Gastrocnemius medialis (tissue), 4 donors: ENCODE measurements at regions of chrX and their contacts with region 1.

Region 1: GRCh38 chrX:30713061-30713525 is 59.9 kb downstream of the GK start:
- DNase-seq: no peak
- ATAC-seq: no peak
- H3K4me3 ChIP-seq: no peak overlapping the region
- H3K27ac ChIP-seq: no peak overlapping the region
- H3K4me1 ChIP-seq: no peaks in the 10 kb centered on the region
- H3K27me3 ChIP-seq: no peaks in the 10 kb centered on the region
- CTCF ChIP-seq: peak in 2 of 5 experiments; percentile 44
- POLR2A ChIP-seq: no peak

Region 2: DNA sequence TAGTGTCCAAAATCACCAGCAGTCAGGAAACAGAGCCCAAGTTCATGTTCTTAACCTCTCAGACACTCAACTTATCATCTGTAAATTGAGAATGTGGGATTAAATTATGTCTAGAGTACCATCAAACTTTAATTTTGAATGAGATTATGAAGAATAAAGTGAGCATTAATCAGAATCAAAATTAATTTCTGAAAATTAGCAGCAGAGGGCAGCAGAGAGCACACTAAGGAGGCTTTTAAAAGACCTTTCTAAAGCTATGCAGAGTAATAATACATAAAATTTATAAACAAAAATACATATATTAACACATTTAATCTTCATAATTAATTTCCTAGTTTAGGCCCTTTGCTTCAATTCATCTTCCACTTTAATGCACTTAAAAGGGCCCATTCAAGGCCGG is 142.6 kb before region 1 on chrX:
- in situ Hi-C with region 1: loop called (anchors 10 to 25 kb)
- intact Hi-C with region 1: no loop called
- DNase-seq: no peak
- ATAC-seq: no peak
- H3K4me3 ChIP-seq: no peak overlapping the region
- H3K27ac ChIP-seq: no peak overlapping the region
- H3K4me1 ChIP-seq: no peaks in the 10 kb centered on the region
- H3K27me3 ChIP-seq: no peaks in the 10 kb centered on the region
- CTCF ChIP-seq: peak in 4 of 5 experiments; percentile 26 to 49 (median 32)
- POLR2A ChIP-seq: no peak

Region 3: DNA sequence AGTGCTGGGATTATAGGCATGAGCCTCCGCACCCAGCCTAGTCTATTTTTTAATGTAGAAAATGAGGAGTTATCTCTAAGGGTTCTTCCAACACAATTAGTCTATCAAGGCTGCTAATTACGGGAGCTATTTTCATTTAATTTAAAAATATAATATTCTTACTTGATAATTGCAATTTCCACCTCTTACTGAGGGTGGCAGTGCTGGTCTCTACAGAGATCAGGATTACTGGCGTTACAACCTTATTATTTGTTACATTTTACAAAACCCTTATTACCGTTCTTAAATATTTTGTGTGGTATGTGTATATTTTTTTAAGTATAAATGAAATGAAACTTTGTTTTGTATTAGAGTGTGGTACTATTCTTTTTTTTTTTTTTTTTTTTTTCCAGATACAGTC is 77.5 kb before region 1 on chrX:
- in situ Hi-C with region 1: no loop called
- intact Hi-C with region 1: no loop called
- DNase-seq: no peak
- ATAC-seq: no peak
- H3K4me3 ChIP-seq: no peak overlapping the region
- H3K27ac ChIP-seq: no peak overlapping the region
- H3K4me1 ChIP-seq: no peaks in the 10 kb centered on the region
- H3K27me3 ChIP-seq: no peaks in the 10 kb centered on the region
- CTCF ChIP-seq: no peak
- POLR2A ChIP-seq: no peak

Region 4: GRCh38 chrX:30791296-30792278 is 78.5 kb after region 1 on chrX:
- in situ Hi-C with region 1: no loop called
- intact Hi-C with region 1: no loop called
- DNase-seq: no peak
- ATAC-seq: no peak
- H3K4me3 ChIP-seq: no peak overlapping the region
- H3K27ac ChIP-seq: no peak overlapping the region
- H3K4me1 ChIP-seq: no peaks in the 10 kb centered on the region
- H3K27me3 ChIP-seq: no peaks in the 10 kb centered on the region
- CTCF ChIP-seq: no peak
- POLR2A ChIP-seq: no peak